ENCODE measurements at regions of chr2 and their contacts with region 1.

Region 1: GRCh38 chr2:172172513-172173173 is 69.9 kb upstream of the DLX2 start:
- DNase-seq: peak; percentile 85
- ATAC-seq: peak; percentile 96
- H3K4me3 ChIP-seq: peak overlapping the region; percentile 65
- H3K27ac ChIP-seq: peak overlapping the region; percentile 42
- H3K4me1 ChIP-seq: peaks cover 29% of the 10 kb centered on the region
- H3K27me3 ChIP-seq: no peaks in the 10 kb centered on the region
- CTCF ChIP-seq: peak; percentile 85

Region 2: DNA sequence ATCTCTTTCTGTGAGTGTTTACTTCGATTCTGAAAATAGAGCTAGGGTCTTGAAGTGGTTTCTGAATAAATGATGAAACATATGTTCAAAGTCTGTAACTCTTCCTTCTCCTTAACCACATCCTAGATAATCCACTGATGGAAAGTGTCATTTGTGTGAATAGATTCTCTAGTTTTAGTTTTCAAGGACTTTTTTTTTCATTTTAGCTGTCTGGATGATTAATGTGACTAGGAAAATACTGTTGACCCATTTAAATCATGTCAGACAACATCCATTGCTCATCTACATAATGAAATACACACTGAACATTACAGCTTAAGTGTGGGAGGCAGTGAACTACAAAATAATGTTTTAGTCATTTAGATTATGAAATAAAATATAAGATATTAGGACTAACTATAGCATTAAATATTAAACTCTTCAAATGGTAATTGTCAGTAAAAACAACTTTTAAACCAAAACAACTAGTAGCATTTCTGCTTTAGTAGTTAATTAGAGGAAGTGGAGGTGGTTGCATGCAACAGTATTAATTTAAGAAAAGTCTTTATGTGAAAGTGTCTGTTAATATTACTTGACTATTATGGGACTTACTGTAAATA is 126.5 kb before region 1 on chr2:
- CTCF ChIA-PET with region 1: no interaction called
- POLR2A ChIA-PET with region 1: no interaction called
- intact Hi-C with region 1: no loop called
- DNase-seq: no peak
- ATAC-seq: no peak
- H3K4me3 ChIP-seq: no peak overlapping the region
- H3K27ac ChIP-seq: no peak overlapping the region
- H3K4me1 ChIP-seq: peaks cover 4% of the 10 kb centered on the region; the same call in 1 of the 2 replicates
- H3K27me3 ChIP-seq: no peaks in the 10 kb centered on the region
- CTCF ChIP-seq: no peak

Region 3: GRCh38 chr2:172119089-172119488 is 53.6 kb before region 1 on chr2:
- CTCF ChIA-PET with region 1: no interaction called
- POLR2A ChIA-PET with region 1: no interaction called
- intact Hi-C with region 1: no loop called
- DNase-seq: peak; percentile 93
- ATAC-seq: peak; percentile 79
- H3K4me3 ChIP-seq: peak overlapping the region; percentile 33; the same call in 1 of the 2 replicates
- H3K27ac ChIP-seq: peak overlapping the region; percentile 94
- H3K4me1 ChIP-seq: peaks cover 27% of the 10 kb centered on the region
- H3K27me3 ChIP-seq: no peaks in the 10 kb centered on the region
- CTCF ChIP-seq: no peak

Region 4: GRCh38 chr2:172345956-172346555 is 173.4 kb after region 1 on chr2:
- CTCF ChIA-PET with region 1: no interaction called
- POLR2A ChIA-PET with region 1: no interaction called
- intact Hi-C with region 1: loop called (anchors 5 kb)
- DNase-seq: peak; percentile 19
- ATAC-seq: peak; percentile 30
- H3K4me3 ChIP-seq: no peak overlapping the region
- H3K27ac ChIP-seq: no peak overlapping the region
- H3K4me1 ChIP-seq: peaks cover 51% of the 10 kb centered on the region
- H3K27me3 ChIP-seq: no peaks in the 10 kb centered on the region
- CTCF ChIP-seq: no peak

Region 5: DNA sequence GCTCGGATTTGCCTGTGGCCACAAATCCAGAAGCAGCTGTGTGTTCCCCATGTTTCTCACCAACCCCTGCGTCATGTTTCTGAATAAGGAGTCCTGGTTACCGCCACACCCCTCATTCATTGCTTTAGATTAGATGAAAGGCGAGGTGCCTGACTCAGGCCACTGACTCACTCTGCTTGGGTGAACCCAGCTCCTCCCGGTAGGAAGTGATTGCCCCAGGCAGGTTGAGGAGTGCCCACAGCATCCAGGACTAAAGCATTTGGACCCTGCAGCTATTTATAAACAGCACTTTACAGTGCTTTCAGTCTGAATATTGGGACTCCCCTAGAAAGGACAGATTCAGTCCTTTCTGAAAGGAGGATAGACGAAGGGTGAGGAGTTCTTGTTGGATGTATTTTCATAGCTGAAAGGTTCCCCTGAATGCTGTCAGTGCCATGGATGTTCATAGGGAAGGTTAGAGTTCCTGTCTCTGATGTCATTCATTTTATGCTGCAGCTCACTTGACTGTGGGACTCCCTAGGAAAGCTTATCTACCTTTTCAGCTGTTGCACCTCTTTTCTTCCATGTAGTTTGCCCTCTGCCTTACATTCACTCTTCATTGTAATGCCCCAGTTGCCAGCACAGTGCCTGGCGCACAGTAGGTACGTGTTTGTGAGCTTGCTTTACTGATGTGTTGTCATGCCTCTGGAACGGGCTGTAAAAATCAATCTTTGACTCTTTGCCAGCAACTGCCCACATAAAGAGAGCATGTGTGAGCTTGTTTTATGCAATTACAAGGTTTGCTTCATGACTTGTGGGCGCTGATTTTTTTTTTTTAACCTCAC is 269.6 kb after region 1 on chr2:
- CTCF ChIA-PET with region 1: interaction called, 11 read pairs
- POLR2A ChIA-PET with region 1: interaction called, 8 read pairs
- intact Hi-C with region 1: no loop called
- DNase-seq: peak; percentile 99
- ATAC-seq: peak; percentile 81
- H3K4me3 ChIP-seq: peak overlapping the region; percentile 47
- H3K27ac ChIP-seq: peak overlapping the region; percentile 97
- H3K4me1 ChIP-seq: peaks cover 77% of the 10 kb centered on the region
- H3K27me3 ChIP-seq: no peaks in the 10 kb centered on the region
- CTCF ChIP-seq: no peak